Activated CD8-positive, alpha-beta T cell treated with anti-CD3 and anti-CD28 coated beads for 36 hours (primary cell): ENCODE measurements at regions of chrX and their contacts with region 1.

Region 1: DNA sequence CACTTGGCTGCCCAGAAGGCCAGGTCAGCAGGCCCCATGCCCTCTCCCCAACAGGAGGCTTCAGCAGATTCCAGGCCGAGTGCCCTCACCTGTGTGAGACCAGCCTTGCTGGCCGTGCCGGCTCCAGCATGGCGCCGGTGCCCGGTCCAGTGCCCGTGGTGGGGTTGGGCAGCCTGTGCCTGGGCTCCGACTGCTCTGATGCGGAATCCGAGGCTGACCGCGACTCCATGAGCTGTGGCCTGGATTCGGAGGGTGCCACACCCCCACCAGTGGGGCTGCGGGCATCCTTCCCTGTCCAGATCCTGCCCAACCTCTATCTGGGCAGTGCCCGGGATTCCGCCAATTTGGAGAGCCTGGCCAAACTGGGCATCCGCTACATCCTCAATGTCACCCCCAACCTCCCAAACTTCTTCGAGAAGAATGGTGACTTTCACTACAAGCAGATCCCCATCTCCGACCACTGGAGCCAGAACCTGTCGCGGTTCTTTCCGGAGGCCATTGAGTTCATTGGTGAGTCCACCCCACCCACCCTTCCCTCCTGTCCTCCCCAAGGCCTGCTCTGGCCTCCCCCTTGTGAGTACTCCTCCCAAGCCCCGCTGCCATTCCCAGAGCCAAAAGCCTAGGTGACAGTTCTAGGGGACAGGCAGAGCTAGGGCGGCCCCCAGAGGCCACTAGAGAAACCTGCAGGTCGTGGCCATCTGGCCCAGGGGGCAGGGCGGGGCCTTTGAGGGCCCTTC is 2.3 kb downstream of the DUSP9 start:
- DNase-seq: peak; percentile 55
- ATAC-seq: peak; percentile 91
- H3K4me3 Mint-ChIP-seq: no peak overlapping the region
- H3K27ac Mint-ChIP-seq: no peak overlapping the region
- H3K4me1 Mint-ChIP-seq: peaks cover 2% of the 10 kb centered on the region
- H3K27me3 Mint-ChIP-seq: peaks cover 23% of the 10 kb centered on the region
- CTCF ChIP-seq: peak; percentile 57

Region 2: GRCh38 chrX:153539171-153539978 is 110.0 kb before region 1 on chrX:
- CTCF ChIA-PET with region 1: interaction called, 10 read pairs
- POLR2A ChIA-PET with region 1: interaction called, 3 read pairs
- intact Hi-C with region 1: no loop called
- DNase-seq: peak; percentile 63
- ATAC-seq: peak; percentile 94
- H3K4me3 Mint-ChIP-seq: no peak overlapping the region
- H3K27ac Mint-ChIP-seq: no peak overlapping the region
- H3K4me1 Mint-ChIP-seq: no peaks in the 10 kb centered on the region
- H3K27me3 Mint-ChIP-seq: no peaks in the 10 kb centered on the region
- CTCF ChIP-seq: peak; percentile 63

Region 3: DNA sequence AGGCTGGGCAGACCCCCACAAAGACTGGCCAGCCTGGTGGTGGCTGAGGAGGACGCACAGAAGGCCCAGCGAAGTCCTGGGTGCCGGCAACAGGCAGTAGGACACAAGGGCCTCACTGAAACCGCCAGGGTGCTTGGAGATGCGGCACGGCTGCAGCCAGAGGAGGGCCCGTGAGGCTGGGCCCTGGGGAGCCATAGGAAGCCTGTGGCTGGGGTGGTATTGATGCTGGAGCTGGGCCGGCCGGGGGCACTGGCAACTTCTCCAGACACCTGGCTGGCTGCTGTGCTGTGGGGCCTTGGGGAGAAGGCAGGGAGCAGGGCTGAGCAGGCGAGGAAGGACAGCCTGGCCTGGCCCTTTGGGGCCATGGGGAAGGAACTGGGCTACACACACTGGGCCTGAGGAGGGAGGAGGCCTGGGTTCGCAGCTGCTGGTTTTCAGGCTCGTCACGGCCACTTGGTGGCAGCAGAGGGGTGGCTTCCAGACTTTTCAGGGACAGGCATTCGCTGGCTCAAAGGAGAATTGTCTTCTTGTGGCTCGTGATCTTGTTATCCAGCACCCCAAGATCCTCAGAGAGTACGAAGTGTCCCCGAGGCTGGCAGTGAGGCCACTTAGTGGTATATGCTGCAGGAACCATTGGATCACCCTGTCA is 94.7 kb before region 1 on chrX:
- CTCF ChIA-PET with region 1: interaction called, 16 read pairs
- POLR2A ChIA-PET with region 1: no interaction called
- intact Hi-C with region 1: loop called (anchors 5 kb)
- DNase-seq: peak; percentile 74
- ATAC-seq: peak; percentile 70
- H3K4me3 Mint-ChIP-seq: no peak overlapping the region
- H3K27ac Mint-ChIP-seq: no peak overlapping the region
- H3K4me1 Mint-ChIP-seq: no peaks in the 10 kb centered on the region
- H3K27me3 Mint-ChIP-seq: no peaks in the 10 kb centered on the region
- CTCF ChIP-seq: peak; percentile 41

Region 4: GRCh38 chrX:153582896-153583295 is 66.5 kb before region 1 on chrX:
- CTCF ChIA-PET with region 1: no interaction called
- POLR2A ChIA-PET with region 1: no interaction called
- intact Hi-C with region 1: no loop called
- DNase-seq: peak; percentile 82
- ATAC-seq: peak; percentile 100
- H3K4me3 Mint-ChIP-seq: peak overlapping the region; percentile 36
- H3K27ac Mint-ChIP-seq: peak overlapping the region; percentile 46
- H3K4me1 Mint-ChIP-seq: peaks cover 16% of the 10 kb centered on the region
- H3K27me3 Mint-ChIP-seq: no peaks in the 10 kb centered on the region
- CTCF ChIP-seq: no peak

Region 5: GRCh38 chrX:153609917-153610428 is 39.4 kb before region 1 on chrX:
- CTCF ChIA-PET with region 1: interaction called, 12 read pairs
- POLR2A ChIA-PET with region 1: interaction called, 3 read pairs
- intact Hi-C with region 1: no loop called
- DNase-seq: peak; percentile 81
- ATAC-seq: peak; percentile 94
- H3K4me3 Mint-ChIP-seq: peak overlapping the region; percentile 60
- H3K27ac Mint-ChIP-seq: no peak overlapping the region
- H3K4me1 Mint-ChIP-seq: peaks cover 4% of the 10 kb centered on the region
- H3K27me3 Mint-ChIP-seq: no peaks in the 10 kb centered on the region
- CTCF ChIP-seq: peak; percentile 66